ENCODE measurements at regions of chr15 and their contacts with region 1.

Region 1: DNA sequence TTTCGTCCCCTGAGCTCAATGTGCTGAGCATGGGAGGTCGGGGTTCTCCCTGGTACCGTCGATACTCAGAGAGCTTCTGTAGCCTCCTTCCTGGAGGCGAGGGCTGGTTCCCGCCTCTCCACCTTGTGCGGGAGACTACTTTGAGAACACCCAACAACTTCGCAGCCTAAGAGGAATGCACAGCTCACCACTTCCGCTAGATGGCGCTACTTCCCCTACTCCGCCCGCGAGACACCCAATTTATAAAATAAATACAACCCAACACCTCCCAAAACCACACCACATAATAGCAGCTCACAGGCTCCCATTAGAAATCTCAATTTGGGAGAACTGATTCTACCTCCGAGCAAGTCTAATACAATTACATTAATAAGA is 1.2 kb downstream of the RGMA start:
- DNase-seq: peak; percentile 52
- H3K4me3 ChIP-seq: peak overlapping the region in 2 of 3 experiments; percentile 48 to 52
- H3K27ac ChIP-seq: no peak overlapping the region
- H3K4me1 ChIP-seq: peaks cover 9% of the 10 kb centered on the region
- H3K27me3 ChIP-seq: peaks cover 5% of the 10 kb centered on the region
- CTCF ChIP-seq: peak; percentile 81 to 92

Region 2: DNA sequence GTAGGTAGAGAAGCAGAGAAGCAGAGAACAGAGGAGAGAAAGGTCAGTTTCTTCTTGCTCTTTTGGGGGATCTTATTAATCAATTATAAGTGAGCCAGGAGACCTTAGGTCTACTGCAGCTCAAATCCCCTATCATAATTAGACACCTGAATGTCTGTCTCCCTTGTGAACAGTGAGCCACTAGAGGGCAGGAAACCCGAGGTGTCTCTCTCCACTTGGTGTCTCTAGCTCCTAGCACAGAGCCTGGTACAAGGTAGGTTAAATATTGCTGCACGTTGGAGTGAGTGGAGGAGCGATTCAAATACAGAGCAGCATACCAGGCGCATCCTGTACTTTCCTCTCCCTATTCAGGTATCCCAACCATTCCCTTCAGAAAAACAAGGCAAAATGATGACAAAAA is 696.2 kb before region 1 on chr15:
- CTCF ChIA-PET with region 1: interaction called, 17 read pairs
- dilution Hi-C with region 1: no loop called
- in situ Hi-C with region 1: no loop called
- intact Hi-C with region 1: no loop called
- DNase-seq: peak; percentile 53
- H3K4me3 ChIP-seq: no peak overlapping the region
- H3K27ac ChIP-seq: no peak overlapping the region
- H3K4me1 ChIP-seq: peaks cover 9% of the 10 kb centered on the region
- H3K27me3 ChIP-seq: peaks cover 27% of the 10 kb centered on the region
- CTCF ChIP-seq: peak; percentile 68 to 77

Region 3: DNA sequence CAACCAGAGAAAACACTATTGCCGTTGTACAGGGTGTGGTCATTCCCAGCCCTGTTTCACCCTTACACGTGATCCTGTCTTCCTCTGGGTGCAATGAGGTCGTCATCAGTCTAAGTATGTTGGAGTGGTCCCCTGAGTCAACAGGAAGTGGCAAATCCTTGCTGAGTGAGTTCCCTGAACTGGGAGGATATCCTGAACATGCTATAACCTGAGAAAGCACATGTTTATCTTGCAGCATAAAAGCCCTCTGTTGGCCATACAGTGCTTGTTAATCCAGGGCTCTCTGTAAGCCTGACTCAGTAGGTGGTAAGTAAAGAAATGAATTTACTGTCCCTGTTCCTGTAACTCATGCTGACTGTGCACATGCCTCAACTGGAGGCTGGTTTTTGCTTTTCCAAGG is 478.9 kb after region 1 on chr15:
- CTCF ChIA-PET with region 1: no interaction called
- dilution Hi-C with region 1: no loop called
- in situ Hi-C with region 1: no loop called
- intact Hi-C with region 1: loop called (anchors 2 kb)
- DNase-seq: peak; percentile 97
- H3K4me3 ChIP-seq: no peak overlapping the region
- H3K27ac ChIP-seq: peak overlapping the region; percentile 86
- H3K4me1 ChIP-seq: peaks cover 14% of the 10 kb centered on the region
- H3K27me3 ChIP-seq: no peaks in the 10 kb centered on the region
- CTCF ChIP-seq: peak; percentile 36 to 49

Region 4: GRCh38 chr15:93771196-93772030 is 683.6 kb after region 1 on chr15:
- CTCF ChIA-PET with region 1: interaction called, 4 read pairs
- dilution Hi-C with region 1: no loop called
- in situ Hi-C with region 1: no loop called
- intact Hi-C with region 1: loop called (anchors 5 kb)
- DNase-seq: peak; percentile 84
- H3K4me3 ChIP-seq: no peak overlapping the region
- H3K27ac ChIP-seq: no peak overlapping the region
- H3K4me1 ChIP-seq: peaks cover 24% of the 10 kb centered on the region
- H3K27me3 ChIP-seq: no peaks in the 10 kb centered on the region
- CTCF ChIP-seq: no peak

Region 5: GRCh38 chr15:93997084-93997918 is 909.5 kb after region 1 on chr15:
- CTCF ChIA-PET with region 1: no interaction called
- dilution Hi-C with region 1: no loop called
- in situ Hi-C with region 1: loop called in 1 of 2 experiments (anchors 25 kb)
- intact Hi-C with region 1: loop called (anchors 5 kb)
- DNase-seq: peak; percentile 11
- H3K4me3 ChIP-seq: no peak overlapping the region
- H3K27ac ChIP-seq: no peak overlapping the region
- H3K4me1 ChIP-seq: no peaks in the 10 kb centered on the region
- H3K27me3 ChIP-seq: peaks cover 2% of the 10 kb centered on the region
- CTCF ChIP-seq: peak; percentile 74 to 85